Transverse colon (tissue), 4 donors: ENCODE measurements at regions of chr6 and their contacts with region 1.

Region 1: DNA sequence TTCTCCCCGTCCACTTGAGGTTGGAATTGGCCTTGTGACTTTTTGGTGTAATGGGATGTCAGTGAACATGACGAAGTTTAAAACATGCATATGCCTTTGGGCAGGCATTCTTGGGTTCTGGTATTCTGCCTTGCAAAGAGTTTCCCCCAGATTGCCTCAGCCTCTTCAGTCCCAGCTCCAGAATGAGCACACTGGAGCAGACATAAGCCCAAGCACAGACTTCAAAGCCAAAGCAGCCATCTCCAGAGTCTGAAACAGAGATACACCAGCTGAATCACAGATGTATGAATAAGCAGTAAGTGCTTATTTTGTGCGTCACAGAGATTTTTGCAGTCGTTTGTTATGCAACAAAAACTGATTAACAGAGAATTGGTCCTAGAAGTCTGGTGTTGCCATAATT is 546.0 kb downstream of the FRK start:
- DNase-seq: no peak
- H3K4me3 ChIP-seq: no peak overlapping the region
- H3K27ac ChIP-seq: no peak overlapping the region
- H3K4me1 ChIP-seq: no peaks in the 10 kb centered on the region
- H3K27me3 ChIP-seq: no peaks in the 10 kb centered on the region
- CTCF ChIP-seq: no peak
- EP300 ChIP-seq: no peak
- POLR2A ChIP-seq: no peak

Region 2: GRCh38 chr6:115441651-115442050 is 73.0 kb before region 1 on chr6:
- in situ Hi-C with region 1: no loop called
- intact Hi-C with region 1: no loop called
- DNase-seq: no peak
- H3K4me3 ChIP-seq: no peak overlapping the region
- H3K27ac ChIP-seq: no peak overlapping the region
- H3K4me1 ChIP-seq: no peaks in the 10 kb centered on the region
- H3K27me3 ChIP-seq: no peaks in the 10 kb centered on the region
- CTCF ChIP-seq: no peak
- EP300 ChIP-seq: no peak
- POLR2A ChIP-seq: no peak

Region 3: GRCh38 chr6:115485400-115485799 is 29.3 kb before region 1 on chr6:
- in situ Hi-C with region 1: no loop called
- intact Hi-C with region 1: loop called (anchors 2 kb)
- DNase-seq: no peak
- H3K4me3 ChIP-seq: no peak overlapping the region
- H3K27ac ChIP-seq: no peak overlapping the region
- H3K4me1 ChIP-seq: no peaks in the 10 kb centered on the region
- H3K27me3 ChIP-seq: no peaks in the 10 kb centered on the region
- CTCF ChIP-seq: no peak
- EP300 ChIP-seq: no peak
- POLR2A ChIP-seq: no peak

Region 4: DNA sequence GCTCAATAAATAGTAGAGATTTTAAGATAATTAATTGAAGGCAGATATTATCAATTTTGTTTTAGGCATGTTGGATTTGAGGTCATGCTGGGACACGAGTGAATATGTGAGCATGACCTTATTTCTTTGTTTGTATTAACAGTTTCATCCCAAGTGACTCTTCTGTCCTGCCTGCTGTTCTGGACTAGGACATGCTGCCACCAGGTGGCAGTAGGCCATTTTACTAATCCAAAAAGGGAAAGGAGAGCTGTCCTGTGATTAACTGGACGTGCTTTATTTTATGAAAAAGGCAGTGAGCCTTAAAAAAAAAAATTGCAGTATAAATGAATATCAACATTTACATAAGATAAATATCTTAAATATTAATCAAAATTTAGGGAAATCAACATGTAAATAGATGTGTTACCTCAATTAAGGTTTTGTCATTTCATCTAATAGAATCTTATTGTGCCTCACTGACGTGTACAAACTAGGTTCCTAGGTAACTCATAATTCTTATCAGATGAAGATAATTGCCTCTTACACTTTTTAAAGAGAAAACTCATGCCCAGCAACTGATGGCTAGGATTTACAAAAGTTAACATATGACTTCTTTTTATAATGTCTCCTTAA is 496.2 kb after region 1 on chr6:
- in situ Hi-C with region 1: no loop called
- intact Hi-C with region 1: no loop called
- DNase-seq: peak; percentile 78
- H3K4me3 ChIP-seq: no peak overlapping the region
- H3K27ac ChIP-seq: peak overlapping the region; percentile 34 to 66 (median 56)
- H3K4me1 ChIP-seq: peaks cover 0 to 55% (median 32%) of the 10 kb centered on the region in 4 donors
- H3K27me3 ChIP-seq: no peaks in the 10 kb centered on the region
- CTCF ChIP-seq: peak; percentile 73 to 82 (median 82)
- EP300 ChIP-seq: no peak
- POLR2A ChIP-seq: no peak